Mammary epithelial cell (primary cell): ENCODE measurements at regions of chr2 and their contacts with region 1.

Region 1: DNA sequence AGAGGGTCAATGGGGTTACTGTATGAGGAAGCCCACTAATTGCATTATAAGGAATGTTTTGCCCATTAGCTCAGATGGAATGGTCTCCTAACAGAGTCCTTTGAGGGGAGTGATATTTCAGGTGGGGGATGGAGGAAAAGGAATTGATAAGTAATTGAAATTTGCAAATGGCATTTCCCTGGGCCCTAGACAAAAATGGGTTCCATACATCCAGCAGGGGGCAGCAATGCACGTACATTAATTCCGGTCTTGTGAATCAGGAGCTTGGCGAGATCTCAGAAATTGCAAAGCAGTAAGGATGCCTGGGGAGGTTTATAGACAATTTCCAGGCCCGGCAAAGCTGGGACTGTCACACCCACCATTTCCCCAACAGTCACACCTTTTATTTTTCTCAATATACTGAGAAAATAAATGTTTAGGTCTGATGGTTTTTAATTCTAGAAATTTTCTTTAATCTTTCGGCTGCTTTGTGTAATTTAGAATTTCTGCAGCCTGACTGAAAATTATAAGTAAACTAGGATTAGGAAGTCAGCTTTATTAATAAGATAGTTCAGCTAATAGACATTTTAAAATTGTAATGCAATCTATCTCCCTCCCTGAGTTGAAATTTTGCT is 122.8 kb downstream of the LYPD1 start:
- DNase-seq: peak; percentile 56
- H3K4me3 ChIP-seq: no peak overlapping the region
- H3K27ac ChIP-seq: no peak overlapping the region
- H3K4me1 ChIP-seq: peaks cover 11% of the 10 kb centered on the region
- H3K27me3 ChIP-seq: no peaks in the 10 kb centered on the region
- CTCF ChIP-seq: peak; percentile 55 to 71

Region 2: DNA sequence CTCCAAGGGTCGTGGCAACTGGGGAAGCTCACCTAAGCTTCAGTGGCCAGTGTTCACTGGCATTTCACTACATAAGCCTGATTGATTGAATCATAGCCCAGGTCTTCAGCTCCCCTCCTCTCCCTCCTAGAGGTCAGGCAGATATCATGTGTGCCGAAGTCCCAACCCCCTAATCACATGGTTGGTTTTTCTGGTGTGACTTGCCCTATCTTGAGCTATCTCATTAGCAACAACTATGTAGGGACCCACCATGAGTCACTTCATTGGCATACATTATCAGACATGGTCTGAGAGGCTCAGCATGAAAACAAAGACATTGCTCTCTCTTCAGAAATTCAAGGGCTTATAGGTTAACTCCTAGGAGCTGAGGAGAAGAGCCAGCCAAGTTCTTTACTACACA is 46.0 kb after region 1 on chr2:
- CTCF ChIA-PET with region 1: no interaction called
- dilution Hi-C with region 1: loop called (anchors 5 kb)
- in situ Hi-C with region 1: no loop called
- intact Hi-C with region 1: no loop called
- DNase-seq: peak; percentile 31
- H3K4me3 ChIP-seq: no peak overlapping the region
- H3K27ac ChIP-seq: no peak overlapping the region
- H3K4me1 ChIP-seq: no peaks in the 10 kb centered on the region
- H3K27me3 ChIP-seq: no peaks in the 10 kb centered on the region
- CTCF ChIP-seq: no peak

Region 3: DNA sequence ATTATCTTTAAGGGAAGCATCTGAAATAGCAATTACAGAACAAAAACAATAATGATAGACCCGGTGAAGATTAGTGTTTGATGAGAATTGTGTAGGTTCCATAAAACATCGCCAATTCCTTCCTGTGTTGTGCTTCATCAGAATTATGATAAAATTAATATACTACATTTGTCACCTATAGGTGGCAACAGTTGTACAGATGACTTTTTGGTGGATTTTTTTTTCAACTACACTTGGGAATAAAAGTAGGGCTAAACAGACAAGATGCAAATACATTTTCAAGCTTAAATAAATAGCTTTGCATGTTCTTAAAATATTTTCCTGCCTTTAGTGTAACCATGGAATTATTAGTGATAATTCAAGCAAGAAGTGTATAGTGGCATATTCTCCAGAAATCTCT is 129.8 kb after region 1 on chr2:
- CTCF ChIA-PET with region 1: no interaction called
- dilution Hi-C with region 1: no loop called
- in situ Hi-C with region 1: no loop called
- intact Hi-C with region 1: loop called (anchors 5 kb)
- DNase-seq: no peak
- H3K4me3 ChIP-seq: no peak overlapping the region
- H3K27ac ChIP-seq: no peak overlapping the region
- H3K4me1 ChIP-seq: no peaks in the 10 kb centered on the region
- H3K27me3 ChIP-seq: no peaks in the 10 kb centered on the region
- CTCF ChIP-seq: peak; percentile 18 to 38

Region 4: GRCh38 chr2:133213651-133214050 is 666.5 kb after region 1 on chr2:
- CTCF ChIA-PET with region 1: no interaction called
- dilution Hi-C with region 1: no loop called
- in situ Hi-C with region 1: no loop called
- intact Hi-C with region 1: no loop called
- DNase-seq: no peak
- H3K4me3 ChIP-seq: no peak overlapping the region
- H3K27ac ChIP-seq: no peak overlapping the region
- H3K4me1 ChIP-seq: no peaks in the 10 kb centered on the region
- H3K27me3 ChIP-seq: no peaks in the 10 kb centered on the region
- CTCF ChIP-seq: no peak

Region 5: GRCh38 chr2:133561045-133561852 is 1014.1 kb after region 1 on chr2:
- CTCF ChIA-PET with region 1: no interaction called
- dilution Hi-C with region 1: no loop called
- in situ Hi-C with region 1: no loop called
- intact Hi-C with region 1: loop called (anchors 5 kb)
- DNase-seq: peak; percentile 41
- H3K4me3 ChIP-seq: no peak overlapping the region
- H3K27ac ChIP-seq: no peak overlapping the region
- H3K4me1 ChIP-seq: no peaks in the 10 kb centered on the region
- H3K27me3 ChIP-seq: no peaks in the 10 kb centered on the region
- CTCF ChIP-seq: peak; percentile 58 to 70